ENCODE measurements at regions of chr4 and their contacts with region 1.

Region 1: DNA sequence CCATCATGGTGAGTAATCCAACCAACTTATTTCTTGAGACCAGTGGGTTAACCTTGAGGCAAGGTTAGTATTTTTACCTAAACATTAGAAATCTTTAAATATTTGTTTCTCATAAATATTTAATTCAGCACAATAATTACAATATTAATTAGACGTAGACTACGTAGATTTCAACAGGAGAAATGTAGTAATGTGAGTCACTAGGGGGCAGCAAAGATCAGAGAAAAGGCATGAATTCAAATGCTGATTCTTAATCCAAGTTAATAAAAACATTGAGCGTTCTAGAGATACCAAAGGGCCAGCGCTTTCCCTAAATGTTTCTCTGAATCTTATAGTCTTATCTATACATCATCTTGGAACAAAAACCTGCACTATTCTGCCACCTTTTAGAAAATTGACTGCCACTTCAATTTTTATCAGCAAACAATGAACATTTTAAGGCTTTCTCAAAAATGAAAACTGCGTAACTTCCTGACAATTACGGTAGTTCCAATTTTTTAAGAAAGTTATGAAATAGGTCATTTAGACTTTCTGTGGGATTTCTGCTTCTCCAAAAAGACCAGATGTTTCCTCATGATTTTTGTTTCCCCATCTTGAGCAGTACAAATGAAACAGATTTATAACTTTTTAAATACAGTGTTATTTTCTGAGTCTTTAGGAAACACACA is 180.7 kb downstream of the GASK1B start:
- DNase-seq: peak; percentile 32
- H3K4me3 Mint-ChIP-seq: no peak overlapping the region
- H3K27ac Mint-ChIP-seq: no peak overlapping the region
- H3K4me1 Mint-ChIP-seq: no peaks in the 10 kb centered on the region
- H3K27me3 Mint-ChIP-seq: no peaks in the 10 kb centered on the region

Region 2: DNA sequence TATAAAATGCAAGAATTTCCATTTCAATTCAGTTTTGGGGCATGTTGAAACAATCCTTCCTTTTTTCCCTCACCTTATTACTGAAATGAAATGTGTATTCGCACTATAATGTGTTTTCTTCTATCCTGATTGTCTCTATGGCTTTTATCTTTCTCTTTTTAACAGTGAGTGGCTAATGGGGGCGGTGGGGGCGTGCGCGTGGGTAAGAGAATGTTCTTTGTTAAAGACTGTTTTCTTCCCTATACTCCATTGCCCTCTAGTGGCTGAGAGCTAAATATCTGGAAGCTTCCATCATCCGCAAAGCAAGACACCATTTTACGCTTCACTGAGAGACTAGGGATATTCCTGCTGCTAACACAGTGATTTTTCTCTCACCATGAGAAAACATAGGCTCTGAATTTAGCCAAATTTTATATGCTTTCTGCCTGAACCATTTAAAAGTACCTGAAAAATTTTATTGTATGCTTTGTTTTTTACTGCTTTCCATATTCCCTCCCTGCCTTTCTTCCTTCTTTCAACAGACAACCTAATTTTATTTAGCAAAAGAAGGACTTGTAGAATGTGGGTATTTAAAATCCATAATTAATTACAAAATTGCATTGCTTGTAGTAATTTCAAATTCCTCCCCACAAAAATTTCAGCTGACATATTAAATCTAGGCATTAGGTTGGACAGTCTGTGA is 13.4 kb before region 1 on chr4:
- CTCF ChIA-PET with region 1: no interaction called
- intact Hi-C with region 1: no loop called
- DNase-seq: peak; percentile 11
- H3K4me3 Mint-ChIP-seq: no peak overlapping the region
- H3K27ac Mint-ChIP-seq: no peak overlapping the region
- H3K4me1 Mint-ChIP-seq: peaks cover 3% of the 10 kb centered on the region
- H3K27me3 Mint-ChIP-seq: peaks cover 4% of the 10 kb centered on the region

Region 3: GRCh38 chr4:158172261-158173258 is 180.4 kb after region 1 on chr4 and contains the start of gene GASK1B:
- CTCF ChIA-PET with region 1: interaction called, 5 read pairs
- intact Hi-C with region 1: loop called (anchors 1 kb)
- DNase-seq: peak; percentile 40
- H3K4me3 Mint-ChIP-seq: no peak within 1 kb of the TSS
- H3K27ac Mint-ChIP-seq: no peak within 1 kb of the TSS
- H3K4me1 Mint-ChIP-seq: peaks cover 5% of the 10 kb centered on the region
- H3K27me3 Mint-ChIP-seq: peaks cover 27% of the 10 kb centered on the region
- total RNA-seq, gene GASK1B: not detected